MCF 10A (cell line): ENCODE measurements at regions of chr16 and their contacts with region 1.

Region 1: GRCh38 chr16:1194665-1195392 is 30.2 kb downstream of the TPSG1 start:
- DNase-seq: no peak
- H3K4me3 Mint-ChIP-seq: no peak overlapping the region
- H3K27ac Mint-ChIP-seq: no peak overlapping the region
- H3K4me1 Mint-ChIP-seq: no peaks in the 10 kb centered on the region
- H3K27me3 Mint-ChIP-seq: no peaks in the 10 kb centered on the region
- CTCF ChIP-seq: peak; percentile 98

Region 2: GRCh38 chr16:1105888-1106620 is 88.8 kb before region 1 on chr16:
- CTCF ChIA-PET with region 1: interaction called, 3 read pairs
- POLR2A ChIA-PET with region 1: no interaction called
- intact Hi-C with region 1: loop called (anchors 2 kb)
- DNase-seq: peak; percentile 63
- H3K4me3 Mint-ChIP-seq: no peak overlapping the region
- H3K27ac Mint-ChIP-seq: no peak overlapping the region
- H3K4me1 Mint-ChIP-seq: no peaks in the 10 kb centered on the region
- H3K27me3 Mint-ChIP-seq: peaks cover 72% of the 10 kb centered on the region
- CTCF ChIP-seq: peak; percentile 98

Region 3: DNA sequence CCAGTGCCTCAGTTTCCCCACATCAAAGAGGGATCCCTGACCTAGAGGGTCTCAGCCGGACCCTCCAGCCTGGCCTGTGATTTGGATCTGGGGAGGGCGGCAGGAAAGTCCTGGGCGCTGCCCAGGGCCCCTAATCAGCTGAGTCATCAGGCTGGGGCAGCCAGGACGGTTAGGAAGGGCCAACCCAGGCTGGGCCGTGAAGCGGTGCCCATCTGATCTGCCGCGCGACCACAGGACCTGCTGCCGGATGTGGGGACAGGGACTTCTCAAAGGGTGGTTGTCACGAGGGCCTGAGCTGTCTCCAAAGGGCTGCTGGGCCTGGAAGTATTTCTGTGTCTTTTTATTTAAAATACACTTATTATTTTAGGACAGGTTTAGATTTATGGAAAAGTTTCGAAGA is 50.1 kb after region 1 on chr16:
- CTCF ChIA-PET with region 1: no interaction called
- POLR2A ChIA-PET with region 1: no interaction called
- intact Hi-C with region 1: no loop called
- DNase-seq: no peak
- H3K4me3 Mint-ChIP-seq: no peak overlapping the region
- H3K27ac Mint-ChIP-seq: no peak overlapping the region
- H3K4me1 Mint-ChIP-seq: no peaks in the 10 kb centered on the region
- H3K27me3 Mint-ChIP-seq: no peaks in the 10 kb centered on the region
- CTCF ChIP-seq: no peak